AG04449 (cell line): ENCODE measurements at regions of chr12 and their contacts with region 1.

Region 1: GRCh38 chr12:7933255-7933729 is 2.7 kb downstream of the SLC2A3 start:
- DNase-seq: peak; percentile 81
- H3K4me3 ChIP-seq: peak overlapping the region; percentile 90
- CTCF ChIP-seq: peak; percentile 63

Region 2: GRCh38 chr12:7859552-7859951 is 73.7 kb before region 1 on chr12:
- CTCF ChIA-PET with region 1: interaction called, 54 read pairs
- POLR2A ChIA-PET with region 1: interaction called, 11 read pairs
- DNase-seq: no peak
- H3K4me3 ChIP-seq: peak overlapping the region; percentile 16
- CTCF ChIP-seq: no peak

Region 3: GRCh38 chr12:7915559-7916403 is 17.5 kb before region 1 on chr12:
- CTCF ChIA-PET with region 1: interaction called, 44 read pairs
- POLR2A ChIA-PET with region 1: interaction called, 5 read pairs
- DNase-seq: no peak
- H3K4me3 ChIP-seq: peak overlapping the region; percentile 8; the same call in 1 of the 2 replicates
- CTCF ChIP-seq: no peak

Region 4: DNA sequence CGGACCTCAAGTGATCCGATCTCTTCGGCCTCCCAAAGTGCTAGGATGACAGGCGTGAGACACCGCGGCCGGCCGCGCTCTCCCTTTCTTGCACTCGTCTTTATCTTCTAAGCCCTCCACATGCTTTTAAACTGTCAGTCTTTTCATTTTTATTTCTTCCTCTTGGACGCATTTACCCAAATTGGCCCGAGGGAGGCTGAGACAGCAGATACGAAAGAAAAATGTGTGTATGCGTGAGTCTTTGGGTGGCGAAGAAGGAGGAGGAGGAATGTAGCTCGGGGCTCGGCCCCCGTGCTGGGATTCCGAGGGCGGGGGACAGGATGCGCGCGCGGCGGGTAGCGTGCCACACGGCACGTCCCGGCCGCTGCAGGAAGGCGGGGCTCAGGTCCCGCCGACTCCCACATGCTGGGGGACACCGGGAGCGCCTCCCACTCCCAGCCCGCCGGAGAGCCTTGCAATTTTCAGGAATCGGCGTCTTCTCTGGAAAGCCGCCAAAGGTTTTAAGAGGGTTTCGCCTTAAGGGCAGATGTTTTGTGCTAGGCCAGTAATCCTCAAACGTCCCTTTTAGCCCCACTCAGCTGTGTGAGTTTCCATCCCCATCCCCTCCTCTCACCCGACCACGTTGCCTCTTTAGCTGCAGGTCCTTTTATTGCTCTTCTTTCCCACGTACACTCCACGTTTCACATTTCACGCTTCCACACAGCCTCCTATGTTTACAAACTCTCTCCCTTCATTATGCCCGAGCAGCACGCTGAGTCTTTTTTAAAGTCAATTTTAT is 37.4 kb after region 1 on chr12:
- CTCF ChIA-PET with region 1: interaction called, 142 read pairs
- POLR2A ChIA-PET with region 1: interaction called, 169 read pairs
- DNase-seq: peak; percentile 83
- H3K4me3 ChIP-seq: peak overlapping the region; percentile 62
- CTCF ChIP-seq: no peak

Region 5: GRCh38 chr12:8026291-8026900 is 93.1 kb after region 1 on chr12:
- CTCF ChIA-PET with region 1: interaction called, 12 read pairs
- POLR2A ChIA-PET with region 1: interaction called, 8 read pairs
- DNase-seq: peak; percentile 96
- H3K4me3 ChIP-seq: peak overlapping the region; percentile 80
- CTCF ChIP-seq: no peak

Region 6: GRCh38 chr12:8038659-8039114 is 105.4 kb after region 1 on chr12:
- CTCF ChIA-PET with region 1: interaction called, 24 read pairs
- POLR2A ChIA-PET with region 1: interaction called, 4 read pairs
- DNase-seq: no peak
- H3K4me3 ChIP-seq: peak overlapping the region; percentile 45
- CTCF ChIP-seq: no peak

Region 7: DNA sequence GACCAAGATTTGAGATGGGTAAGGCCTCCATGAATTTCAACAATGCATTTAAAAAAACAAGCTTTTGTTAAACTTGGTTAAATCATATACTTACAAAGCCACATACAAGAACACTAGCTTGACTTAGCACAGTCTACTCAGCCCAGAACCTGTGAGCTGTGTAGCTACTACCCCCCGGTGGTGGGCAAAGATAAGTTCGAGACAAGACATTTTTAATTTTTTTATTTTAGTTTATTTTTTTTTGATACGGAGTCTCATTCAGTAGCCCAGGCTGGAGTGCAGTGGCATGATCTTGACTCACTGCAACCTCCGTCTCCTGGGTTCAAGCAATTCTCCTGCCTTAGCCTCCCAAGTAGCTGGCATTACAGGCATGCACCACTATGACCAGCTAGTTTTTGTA is 145.1 kb after region 1 on chr12:
- CTCF ChIA-PET with region 1: interaction called, 31 read pairs
- POLR2A ChIA-PET with region 1: no interaction called
- DNase-seq: peak; percentile 52
- H3K4me3 ChIP-seq: no peak overlapping the region
- CTCF ChIP-seq: peak; percentile 44